Right ventricle myocardium superior (tissue), 1 donor: ENCODE measurements at regions of chr6 and their contacts with region 1.

Region 1: DNA sequence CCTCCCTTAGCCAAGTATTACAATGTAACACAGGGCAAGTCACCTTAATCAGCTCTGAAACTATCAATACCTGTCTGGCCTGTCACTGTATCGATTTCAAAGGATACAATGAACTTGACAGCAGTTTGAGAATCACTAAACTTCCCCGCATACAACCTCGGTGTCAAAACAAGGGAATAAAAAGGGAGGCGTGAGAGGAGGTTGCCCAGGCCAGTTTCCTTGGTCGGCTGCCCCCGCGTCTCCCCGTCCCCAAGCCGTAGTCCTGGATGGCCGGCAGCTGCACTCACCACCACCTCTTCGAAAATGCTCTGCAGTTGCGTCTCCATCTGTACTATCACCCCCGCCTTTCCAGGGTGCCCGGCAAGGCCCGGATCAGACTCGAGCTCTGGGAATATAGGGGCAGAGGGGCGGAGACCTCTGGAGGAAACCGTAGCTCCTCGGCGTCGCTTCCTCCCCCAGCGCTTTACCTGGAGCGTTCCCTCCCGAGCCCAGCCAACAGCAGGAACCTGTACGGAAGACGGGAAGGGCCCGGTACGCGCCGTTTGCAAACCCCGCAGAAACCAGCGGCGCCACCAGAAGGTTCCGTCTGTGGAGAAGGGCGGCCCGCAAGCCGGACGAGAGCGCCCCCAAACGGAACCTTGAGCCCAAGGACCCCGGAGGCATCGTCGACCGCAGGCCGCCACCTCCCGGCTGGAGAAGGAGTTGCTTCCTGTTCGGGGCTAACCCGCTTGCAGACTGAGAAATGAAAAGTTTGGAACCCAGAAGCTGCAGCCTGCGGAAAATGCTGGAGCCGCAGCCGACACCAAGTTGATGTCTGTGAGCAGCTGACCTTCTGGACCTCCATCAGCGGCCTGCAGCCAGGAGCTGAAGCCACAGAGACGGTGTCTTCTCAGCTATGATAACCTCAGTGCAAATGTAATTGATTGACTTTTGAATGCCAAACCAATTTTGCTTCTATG is at the start of gene MED23:
- DNase-seq: peak; percentile 96
- ATAC-seq: peak; percentile 99
- total RNA-seq, gene MED23: 10.6 TPM

Region 2: DNA sequence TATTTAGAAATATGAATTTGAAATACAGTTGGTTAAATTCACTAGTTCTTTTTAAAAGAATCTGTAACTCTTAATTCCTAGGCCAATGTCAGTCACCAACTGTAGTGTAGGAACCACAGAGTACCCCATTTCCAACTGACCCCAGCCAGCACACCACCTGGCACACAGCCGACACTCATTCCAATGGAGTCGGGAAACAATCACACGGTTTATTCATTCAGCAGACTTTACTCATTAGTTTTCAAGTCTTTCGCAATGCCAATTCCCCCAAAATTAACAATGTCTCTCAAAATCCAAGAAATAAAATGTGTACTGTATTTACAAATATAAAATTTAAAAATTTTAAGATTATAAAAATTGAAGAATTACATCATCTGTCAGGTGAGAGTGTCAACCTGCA is 41.5 kb before region 1 on chr6:
- intact Hi-C with region 1: loop called (anchors 5 kb)
- DNase-seq: no peak
- ATAC-seq: no peak